Heart right ventricle (tissue), 16 donors: ENCODE measurements at regions of chr12 and their contacts with region 1.

Region 1: GRCh38 chr12:117874842-117875434 is 93.9 kb downstream of the KSR2 start:
- DNase-seq: peak; percentile 60 to 68
- ATAC-seq: peak; percentile 75 to 84 (median 80)
- H3K4me3 ChIP-seq: no peak overlapping the region
- H3K27ac ChIP-seq: no peak overlapping the region
- H3K4me1 ChIP-seq: peaks cover 0 to 9% (median 0%) of the 10 kb centered on the region in 9 donors
- H3K27me3 ChIP-seq: peaks cover 0 to 38% (median 29%) of the 10 kb centered on the region in 7 donors
- CTCF ChIP-seq: peak; percentile 77 to 90 (median 87)

Region 2: DNA sequence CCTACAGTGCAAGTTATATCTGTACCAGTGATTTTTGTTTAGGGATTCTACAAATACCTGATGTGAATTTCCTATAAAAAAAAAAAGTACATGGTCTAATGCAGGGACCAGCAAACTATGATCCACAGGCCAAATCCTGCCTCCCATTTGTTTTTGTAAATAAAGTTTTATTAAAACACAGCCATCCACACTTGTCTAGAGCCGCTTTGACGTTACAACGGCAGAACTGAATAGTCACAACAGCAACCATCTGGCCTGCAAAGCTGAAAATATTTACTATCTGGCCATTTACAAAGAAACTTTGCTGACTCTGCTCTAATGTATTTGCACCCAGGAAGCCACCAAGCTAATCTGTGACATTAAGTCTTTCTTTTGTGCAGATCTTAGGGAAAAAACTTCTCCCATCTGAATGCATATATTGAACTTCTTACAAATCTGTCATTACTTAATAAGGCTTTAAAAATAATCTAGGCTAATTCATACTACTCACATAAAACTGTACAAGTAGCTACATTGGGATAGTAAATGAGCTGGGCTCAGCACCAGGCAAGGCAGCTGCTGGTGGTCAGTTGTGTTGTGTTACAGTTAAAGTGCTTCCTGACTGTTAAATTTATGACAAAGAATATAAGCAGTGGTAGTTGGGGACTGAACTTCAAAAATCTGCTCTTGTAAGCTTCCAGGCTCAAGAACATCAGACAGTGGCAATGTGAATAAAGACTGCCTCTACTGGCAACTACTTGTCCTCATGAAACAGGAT is 1900.8 kb before region 1 on chr12:
- intact Hi-C with region 1: no loop called
- DNase-seq: no peak
- ATAC-seq: no peak
- H3K4me3 ChIP-seq: no peak overlapping the region
- H3K27ac ChIP-seq: no peak overlapping the region
- H3K4me1 ChIP-seq: peaks cover 0 to 26% (median 4%) of the 10 kb centered on the region in 9 donors
- H3K27me3 ChIP-seq: no peaks in the 10 kb centered on the region
- CTCF ChIP-seq: no peak

Region 3: GRCh38 chr12:117069926-117070900 is 804.7 kb before region 1 on chr12:
- intact Hi-C with region 1: no loop called
- DNase-seq: no peak
- ATAC-seq: peak in 7 of 8 donors; percentile 13 to 69 (median 50)
- H3K4me3 ChIP-seq: no peak overlapping the region
- H3K27ac ChIP-seq: peak overlapping the region in 9 of 10 donors; percentile 20 to 80 (median 76)
- H3K4me1 ChIP-seq: peaks cover 0 to 68% (median 30%) of the 10 kb centered on the region in 9 donors
- H3K27me3 ChIP-seq: no peaks in the 10 kb centered on the region
- CTCF ChIP-seq: no peak

Region 4: GRCh38 chr12:118016424-118017264 is 141.7 kb after region 1 on chr12 and contains the start of gene RFC5:
- intact Hi-C with region 1: loop called in 4 of 10 experiments (anchors 5 to 10 kb)
- DNase-seq: peak; percentile 98 to 99
- ATAC-seq: peak; percentile 99 to 100 (median 100)
- H3K4me3 ChIP-seq: peak within 1 kb of the TSS; percentile 75 to 98 (median 93)
- H3K27ac ChIP-seq: peak within 1 kb of the TSS in 6 of 10 donors; percentile 51 to 85 (median 68)
- H3K4me1 ChIP-seq: peaks cover 0 to 17% (median 9%) of the 10 kb centered on the region in 9 donors
- H3K27me3 ChIP-seq: no peaks in the 10 kb centered on the region
- CTCF ChIP-seq: peak in 1 of 9 donors; percentile 13
- total RNA-seq, gene RFC5: 2.8 to 6.2 (median 4.1) TPM

Region 5: GRCh38 chr12:118035246-118036041 is 160.5 kb after region 1 on chr12:
- intact Hi-C with region 1: loop called in 4 of 10 experiments (anchors 5 to 10 kb)
- DNase-seq: no peak
- ATAC-seq: peak in 7 of 8 donors; percentile 12 to 54 (median 43)
- H3K4me3 ChIP-seq: no peak overlapping the region
- H3K27ac ChIP-seq: no peak overlapping the region
- H3K4me1 ChIP-seq: peaks cover 0 to 14% (median 0%) of the 10 kb centered on the region in 9 donors
- H3K27me3 ChIP-seq: no peaks in the 10 kb centered on the region
- CTCF ChIP-seq: no peak